ENCODE measurements at regions of chr22 and their contacts with region 1.

Region 1: GRCh38 chr22:22156716-22157347 is 87.8 kb upstream of the VPREB1 start:
- DNase-seq: peak; percentile 91
- ATAC-seq: peak; percentile 79
- H3K4me3 ChIP-seq: peak overlapping the region in 2 of 5 experiments; percentile 11 to 17
- H3K4me3 Mint-ChIP-seq: peak overlapping the region; percentile 86
- H3K27ac ChIP-seq: peak overlapping the region; percentile 92
- H3K27ac Mint-ChIP-seq: peak overlapping the region; percentile 99
- H3K4me1 ChIP-seq: peaks cover 42 to 53% of the 10 kb centered on the region in 2 donors
- H3K4me1 Mint-ChIP-seq: peaks cover 51% of the 10 kb centered on the region
- H3K27me3 ChIP-seq: no peaks in the 10 kb centered on the region
- H3K27me3 Mint-ChIP-seq: no peaks in the 10 kb centered on the region
- CTCF ChIP-seq: peak; percentile 92

Region 2: GRCh38 chr22:21632237-21632895 is 524.5 kb before region 1 on chr22 and contains the start of gene CCDC116:
- CTCF ChIA-PET with region 1: no interaction called
- POLR2A ChIA-PET with region 1: no interaction called
- intact Hi-C with region 1: no loop called
- DNase-seq: peak; percentile 54
- ATAC-seq: no peak
- H3K4me3 ChIP-seq: no peak within 1 kb of the TSS
- H3K4me3 Mint-ChIP-seq: no peak within 1 kb of the TSS
- H3K27ac ChIP-seq: no peak within 1 kb of the TSS
- H3K27ac Mint-ChIP-seq: no peak within 1 kb of the TSS
- H3K4me1 ChIP-seq: peaks cover 15 to 29% of the 10 kb centered on the region in 2 donors
- H3K4me1 Mint-ChIP-seq: peaks cover 28% of the 10 kb centered on the region
- H3K27me3 ChIP-seq: no peaks in the 10 kb centered on the region
- H3K27me3 Mint-ChIP-seq: no peaks in the 10 kb centered on the region
- CTCF ChIP-seq: no peak
- total RNA-seq, gene CCDC116: 0.52 and 0.63 TPM in 2 replicates

Region 3: GRCh38 chr22:21952586-21953571 is 204.0 kb before region 1 on chr22 and contains the start of gene PPM1F:
- CTCF ChIA-PET with region 1: no interaction called
- POLR2A ChIA-PET with region 1: no interaction called
- intact Hi-C with region 1: no loop called
- DNase-seq: peak; percentile 94
- ATAC-seq: peak; percentile 85
- H3K4me3 ChIP-seq: peak within 1 kb of the TSS; percentile 45 to 81 (median 74)
- H3K4me3 Mint-ChIP-seq: peak within 1 kb of the TSS; percentile 92
- H3K27ac ChIP-seq: peak within 1 kb of the TSS in 1 of 2 donors; percentile 53
- H3K27ac Mint-ChIP-seq: peak within 1 kb of the TSS; percentile 82
- H3K4me1 ChIP-seq: peaks cover 10 to 12% of the 10 kb centered on the region in 2 donors
- H3K4me1 Mint-ChIP-seq: peaks cover 19% of the 10 kb centered on the region
- H3K27me3 ChIP-seq: no peaks in the 10 kb centered on the region
- H3K27me3 Mint-ChIP-seq: no peaks in the 10 kb centered on the region
- CTCF ChIP-seq: peak; percentile 80
- total RNA-seq, gene PPM1F: 30.0 and 33.1 TPM in 2 replicates

Region 4: GRCh38 chr22:22168190-22168940 is 11.5 kb after region 1 on chr22:
- CTCF ChIA-PET with region 1: interaction called, 58 read pairs
- POLR2A ChIA-PET with region 1: interaction called, 15 read pairs
- intact Hi-C with region 1: loop called (anchors 1 kb)
- DNase-seq: peak; percentile 74
- ATAC-seq: peak; percentile 55
- H3K4me3 ChIP-seq: peak overlapping the region; percentile 20 to 59 (median 40)
- H3K4me3 Mint-ChIP-seq: peak overlapping the region; percentile 92
- H3K27ac ChIP-seq: peak overlapping the region; percentile 96 to 98
- H3K27ac Mint-ChIP-seq: peak overlapping the region; percentile 100
- H3K4me1 ChIP-seq: peaks cover 80 to 88% of the 10 kb centered on the region in 2 donors
- H3K4me1 Mint-ChIP-seq: peaks cover 81% of the 10 kb centered on the region
- H3K27me3 ChIP-seq: no peaks in the 10 kb centered on the region
- H3K27me3 Mint-ChIP-seq: no peaks in the 10 kb centered on the region
- CTCF ChIP-seq: no peak

Region 5: GRCh38 chr22:22181341-22181850 is 24.6 kb after region 1 on chr22:
- CTCF ChIA-PET with region 1: interaction called, 16 read pairs
- POLR2A ChIA-PET with region 1: no interaction called
- intact Hi-C with region 1: no loop called
- DNase-seq: no peak
- ATAC-seq: no peak
- H3K4me3 ChIP-seq: no peak overlapping the region
- H3K4me3 Mint-ChIP-seq: no peak overlapping the region
- H3K27ac ChIP-seq: no peak overlapping the region
- H3K27ac Mint-ChIP-seq: no peak overlapping the region
- H3K4me1 ChIP-seq: peaks cover 18 to 27% of the 10 kb centered on the region in 2 donors
- H3K4me1 Mint-ChIP-seq: peaks cover 37% of the 10 kb centered on the region
- H3K27me3 ChIP-seq: no peaks in the 10 kb centered on the region
- H3K27me3 Mint-ChIP-seq: no peaks in the 10 kb centered on the region
- CTCF ChIP-seq: no peak

Region 6: GRCh38 chr22:22235558-22235957 is 78.7 kb after region 1 on chr22:
- CTCF ChIA-PET with region 1: interaction called, 26 read pairs
- POLR2A ChIA-PET with region 1: no interaction called
- intact Hi-C with region 1: loop called (anchors 1 kb)
- DNase-seq: peak; percentile 67
- ATAC-seq: peak; percentile 24
- H3K4me3 ChIP-seq: no peak overlapping the region
- H3K4me3 Mint-ChIP-seq: peak overlapping the region; percentile 37
- H3K27ac ChIP-seq: no peak overlapping the region
- H3K27ac Mint-ChIP-seq: peak overlapping the region; percentile 53
- H3K4me1 ChIP-seq: peaks cover 16 to 27% of the 10 kb centered on the region in 2 donors
- H3K4me1 Mint-ChIP-seq: peaks cover 24% of the 10 kb centered on the region
- H3K27me3 ChIP-seq: no peaks in the 10 kb centered on the region
- H3K27me3 Mint-ChIP-seq: no peaks in the 10 kb centered on the region
- CTCF ChIP-seq: peak; percentile 48

Region 7: DNA sequence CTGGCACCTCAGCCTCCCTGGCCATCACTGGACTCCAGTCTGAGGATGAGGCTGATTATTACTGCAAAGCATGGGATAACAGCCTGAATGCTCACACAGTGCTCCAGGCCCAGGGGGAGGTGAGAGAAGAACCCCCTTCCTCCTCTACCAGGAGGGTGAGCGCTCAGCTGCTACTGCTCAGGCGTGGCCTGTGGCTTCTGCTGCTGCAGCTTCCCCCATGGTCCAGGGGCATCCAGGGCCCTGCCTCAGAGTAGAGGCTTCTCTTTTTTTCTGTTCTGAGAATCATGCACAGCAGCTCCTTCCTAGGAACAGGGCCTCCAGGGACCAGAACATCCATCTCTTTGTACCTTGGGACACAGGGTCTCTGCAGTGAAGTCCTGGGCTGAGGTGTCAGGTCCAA is 170.9 kb after region 1 on chr22:
- CTCF ChIA-PET with region 1: no interaction called
- POLR2A ChIA-PET with region 1: no interaction called
- intact Hi-C with region 1: loop called (anchors 5 kb)
- DNase-seq: no peak
- ATAC-seq: peak; percentile 71
- H3K4me3 ChIP-seq: no peak overlapping the region
- H3K4me3 Mint-ChIP-seq: no peak overlapping the region
- H3K27ac ChIP-seq: no peak overlapping the region
- H3K27ac Mint-ChIP-seq: no peak overlapping the region
- H3K4me1 ChIP-seq: peaks cover 39 to 49% of the 10 kb centered on the region in 2 donors
- H3K4me1 Mint-ChIP-seq: peaks cover 38% of the 10 kb centered on the region
- H3K27me3 ChIP-seq: no peaks in the 10 kb centered on the region
- H3K27me3 Mint-ChIP-seq: peaks cover 9% of the 10 kb centered on the region
- CTCF ChIP-seq: no peak

Measured in B cell (primary cell).